ENCODE measurements at regions of chr6 and their contacts with region 1.

Region 1: GRCh38 chr6:137866914-137867684 is at the start of gene TNFAIP3:
- DNase-seq: peak; percentile 94 to 98 (median 96)
- ATAC-seq: peak; percentile 85
- H3K4me3 ChIP-seq: peak within 1 kb of the TSS; percentile 96
- H3K4me3 Mint-ChIP-seq: peak within 1 kb of the TSS; percentile 88 to 98 (median 94)
- H3K27ac ChIP-seq: peak within 1 kb of the TSS; percentile 99
- H3K27ac Mint-ChIP-seq: peak within 1 kb of the TSS; percentile 89 to 100 (median 99)
- H3K4me1 ChIP-seq: peaks cover 13 to 27% of the 10 kb centered on the region in 2 donors
- H3K4me1 Mint-ChIP-seq: peaks cover 37 to 72% (median 59%) of the 10 kb centered on the region in 7 donors
- H3K27me3 ChIP-seq: no peaks in the 10 kb centered on the region
- H3K27me3 Mint-ChIP-seq: no peaks in the 10 kb centered on the region
- total RNA-seq, gene TNFAIP3: 135 to 2,915 (median 141) TPM

Region 2: GRCh38 chr6:136289579-136290409 is 1577.3 kb before region 1 on chr6 and contains the start of gene BCLAF1:
- CTCF ChIA-PET with region 1: no interaction called
- POLR2A ChIA-PET with region 1: no interaction called
- intact Hi-C with region 1: loop called in 1 of 2 experiments (anchors 2 kb)
- DNase-seq: peak; percentile 98 to 100 (median 100)
- ATAC-seq: peak; percentile 84
- H3K4me3 ChIP-seq: peak within 1 kb of the TSS; percentile 93
- H3K4me3 Mint-ChIP-seq: peak within 1 kb of the TSS; percentile 94 to 100 (median 98)
- H3K27ac ChIP-seq: peak within 1 kb of the TSS; percentile 99
- H3K27ac Mint-ChIP-seq: peak within 1 kb of the TSS; percentile 99 to 100 (median 100)
- H3K4me1 ChIP-seq: peaks cover 35 to 36% of the 10 kb centered on the region in 2 donors
- H3K4me1 Mint-ChIP-seq: peaks cover 19 to 74% (median 58%) of the 10 kb centered on the region in 7 donors
- H3K27me3 ChIP-seq: no peaks in the 10 kb centered on the region
- H3K27me3 Mint-ChIP-seq: peaks cover 0 to 2% (median 0%) of the 10 kb centered on the region in 5 donors
- total RNA-seq, gene BCLAF1: 202 to 439 (median 262) TPM

Region 3: GRCh38 chr6:137717074-137718073 is 149.7 kb before region 1 on chr6:
- CTCF ChIA-PET with region 1: interaction called, 10 read pairs
- POLR2A ChIA-PET with region 1: interaction called, 10 read pairs
- intact Hi-C with region 1: loop called in 1 of 2 experiments (anchors 1 kb)
- DNase-seq: peak; percentile 44 to 85 (median 76)
- ATAC-seq: peak; percentile 74
- H3K4me3 ChIP-seq: no peak overlapping the region
- H3K4me3 Mint-ChIP-seq: peak overlapping the region in 8 of 10 donors; percentile 1 to 76 (median 23)
- H3K27ac ChIP-seq: peak overlapping the region; percentile 65
- H3K27ac Mint-ChIP-seq: peak overlapping the region; percentile 56 to 96 (median 93)
- H3K4me1 ChIP-seq: peaks cover 17 to 36% of the 10 kb centered on the region in 2 donors
- H3K4me1 Mint-ChIP-seq: peaks cover 23 to 65% (median 40%) of the 10 kb centered on the region in 7 donors
- H3K27me3 ChIP-seq: no peaks in the 10 kb centered on the region
- H3K27me3 Mint-ChIP-seq: no peaks in the 10 kb centered on the region

Region 4: GRCh38 chr6:137799950-137800568 is 67.0 kb before region 1 on chr6:
- CTCF ChIA-PET with region 1: interaction called, 74 read pairs
- POLR2A ChIA-PET with region 1: interaction called, 89 read pairs
- intact Hi-C with region 1: loop called (anchors 1 kb)
- DNase-seq: peak in 7 of 9 donors; percentile 75 to 87 (median 81)
- ATAC-seq: peak; percentile 91
- H3K4me3 ChIP-seq: no peak overlapping the region
- H3K4me3 Mint-ChIP-seq: peak overlapping the region in 9 of 10 donors; percentile 0 to 71 (median 49)
- H3K27ac ChIP-seq: peak overlapping the region; percentile 50
- H3K27ac Mint-ChIP-seq: peak overlapping the region; percentile 70 to 97 (median 89)
- H3K4me1 ChIP-seq: peaks cover 15 to 47% of the 10 kb centered on the region in 2 donors
- H3K4me1 Mint-ChIP-seq: peaks cover 27 to 72% (median 64%) of the 10 kb centered on the region in 7 donors
- H3K27me3 ChIP-seq: no peaks in the 10 kb centered on the region
- H3K27me3 Mint-ChIP-seq: no peaks in the 10 kb centered on the region

Region 5: DNA sequence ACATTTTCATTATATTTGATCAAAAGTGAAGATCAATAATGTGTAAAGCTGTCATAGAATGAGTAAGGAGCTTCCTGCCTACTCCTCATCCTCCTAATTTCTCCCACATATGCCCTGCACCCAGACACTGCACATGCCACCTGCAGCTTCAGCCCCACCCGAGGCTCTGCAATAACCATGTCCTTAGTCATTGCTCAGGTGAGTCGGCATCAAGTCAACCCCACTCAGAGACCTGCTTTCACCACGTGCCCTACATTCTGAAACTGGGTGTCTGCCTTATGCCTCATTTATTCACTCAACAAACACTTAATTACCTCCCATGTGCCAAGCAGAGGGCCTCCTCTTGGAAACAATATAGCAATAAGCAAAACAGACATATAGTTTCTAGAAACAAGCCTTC is 15.4 kb before region 1 on chr6:
- CTCF ChIA-PET with region 1: interaction called, 3 read pairs
- POLR2A ChIA-PET with region 1: interaction called, 3 read pairs
- intact Hi-C with region 1: loop called in 1 of 2 experiments (anchors 1 kb)
- DNase-seq: no peak
- ATAC-seq: no peak
- H3K4me3 ChIP-seq: no peak overlapping the region
- H3K4me3 Mint-ChIP-seq: no peak overlapping the region
- H3K27ac ChIP-seq: no peak overlapping the region
- H3K27ac Mint-ChIP-seq: peak overlapping the region in 1 of 9 donors; percentile 4
- H3K4me1 ChIP-seq: no peaks in the 10 kb centered on the region
- H3K4me1 Mint-ChIP-seq: peaks cover 0 to 17% (median 0%) of the 10 kb centered on the region in 7 donors
- H3K27me3 ChIP-seq: no peaks in the 10 kb centered on the region
- H3K27me3 Mint-ChIP-seq: no peaks in the 10 kb centered on the region

Region 6: GRCh38 chr6:137927777-137928218 is 60.7 kb after region 1 on chr6:
- CTCF ChIA-PET with region 1: interaction called, 4 read pairs
- POLR2A ChIA-PET with region 1: interaction called, 8 read pairs
- intact Hi-C with region 1: loop called in 1 of 2 experiments (anchors 1 kb)
- DNase-seq: peak; percentile 34 to 81 (median 74)
- ATAC-seq: peak; percentile 100
- H3K4me3 ChIP-seq: no peak overlapping the region
- H3K4me3 Mint-ChIP-seq: peak overlapping the region in 9 of 10 donors; percentile 60 to 87 (median 76)
- H3K27ac ChIP-seq: peak overlapping the region; percentile 46
- H3K27ac Mint-ChIP-seq: peak overlapping the region; percentile 15 to 93 (median 86)
- H3K4me1 ChIP-seq: peaks cover 19 to 25% of the 10 kb centered on the region in 2 donors
- H3K4me1 Mint-ChIP-seq: peaks cover 26 to 55% (median 41%) of the 10 kb centered on the region in 7 donors
- H3K27me3 ChIP-seq: no peaks in the 10 kb centered on the region
- H3K27me3 Mint-ChIP-seq: no peaks in the 10 kb centered on the region

Region 7: GRCh38 chr6:138109042-138109997 is 242.2 kb after region 1 on chr6:
- CTCF ChIA-PET with region 1: no interaction called
- POLR2A ChIA-PET with region 1: no interaction called
- intact Hi-C with region 1: loop called (anchors 1 to 2 kb)
- DNase-seq: peak; percentile 47 to 77 (median 68)
- ATAC-seq: peak; percentile 84
- H3K4me3 ChIP-seq: no peak overlapping the region
- H3K4me3 Mint-ChIP-seq: peak overlapping the region in 4 of 10 donors; percentile 2 to 45 (median 7)
- H3K27ac ChIP-seq: no peak overlapping the region
- H3K27ac Mint-ChIP-seq: no peak overlapping the region
- H3K4me1 ChIP-seq: peaks cover 8 to 10% of the 10 kb centered on the region in 2 donors
- H3K4me1 Mint-ChIP-seq: peaks cover 14 to 27% (median 20%) of the 10 kb centered on the region in 7 donors
- H3K27me3 ChIP-seq: peaks cover 0 to 6% of the 10 kb centered on the region in 2 donors
- H3K27me3 Mint-ChIP-seq: peaks cover 34 to 56% (median 47%) of the 10 kb centered on the region in 5 donors